GM10248 (cell line): ENCODE measurements at regions of chr21 and their contacts with region 1.

Region 1: GRCh38 chr21:34345091-34345871 is 18.5 kb upstream of the KCNE2 start:
- DNase-seq: no peak
- CTCF ChIP-seq: no peak

Region 2: DNA sequence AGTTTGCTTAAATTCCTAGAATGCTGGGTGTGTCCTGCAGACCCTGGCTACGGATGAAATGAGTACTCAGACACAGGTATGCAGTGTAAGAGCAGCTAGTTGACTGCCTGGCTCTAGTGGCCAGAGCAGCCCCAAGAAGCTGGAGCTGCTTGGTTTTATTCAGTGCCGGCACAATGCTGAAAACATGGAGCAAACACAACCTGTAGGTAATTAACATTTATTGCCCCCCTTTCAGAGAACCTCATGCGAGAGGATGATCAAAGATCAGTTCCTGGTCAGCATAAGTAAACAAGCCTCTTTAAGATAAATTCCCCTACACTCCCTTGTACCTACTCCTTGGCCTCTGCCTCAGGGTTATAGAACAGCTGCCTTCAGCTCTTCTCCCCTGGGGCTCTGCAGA is 228.7 kb before region 1 on chr21:
- CTCF ChIA-PET with region 1: no interaction called
- POLR2A ChIA-PET with region 1: no interaction called
- DNase-seq: no peak
- CTCF ChIP-seq: no peak

Region 3: DNA sequence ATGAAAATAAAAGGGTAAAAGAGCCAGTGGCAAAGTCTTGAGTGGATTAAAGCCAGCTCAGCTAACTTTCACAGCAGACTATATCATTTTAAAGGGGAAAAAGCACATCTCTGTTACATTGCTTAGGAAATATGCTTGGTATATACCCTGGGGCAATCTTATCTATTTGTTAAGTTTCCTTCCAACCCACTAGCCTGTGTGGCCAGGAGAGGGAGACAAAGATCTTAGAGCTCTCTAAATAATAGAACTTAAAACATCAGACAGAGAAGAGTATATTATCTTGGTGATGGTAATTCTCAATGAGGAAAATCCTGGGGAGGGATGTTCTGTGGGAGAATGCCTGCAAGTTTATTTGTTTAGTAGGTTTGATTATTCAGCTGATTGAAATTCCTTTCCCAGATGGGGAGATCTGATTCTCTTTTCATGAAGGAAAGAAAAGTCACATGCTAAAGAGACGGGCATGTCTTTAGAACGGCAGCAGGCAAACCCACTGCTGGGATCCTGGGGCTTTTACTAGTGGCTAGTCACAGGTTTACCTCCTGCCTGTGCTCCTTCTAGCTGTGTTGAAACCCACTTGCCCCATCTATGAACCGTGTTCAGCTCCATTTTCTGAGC is 22.1 kb after region 1 on chr21:
- CTCF ChIA-PET with region 1: interaction called, 58 read pairs
- POLR2A ChIA-PET with region 1: no interaction called
- DNase-seq: peak; percentile 40
- CTCF ChIP-seq: peak; percentile 69